Naive thymus-derived CD4-positive, alpha-beta T cell (primary cell): ENCODE measurements at regions of chr6 and their contacts with region 1.

Region 1: GRCh38 chr6:168370310-168370991 is 50.9 kb upstream of the DACT2 start:
- DNase-seq: peak; percentile 13 to 70 (median 52)
- ATAC-seq: peak; percentile 73
- H3K4me3 ChIP-seq: no peak overlapping the region
- H3K4me3 Mint-ChIP-seq: no peak overlapping the region
- H3K27ac ChIP-seq: no peak overlapping the region
- H3K27ac Mint-ChIP-seq: no peak overlapping the region
- H3K4me1 ChIP-seq: peaks cover 0 to 3% of the 10 kb centered on the region in 2 donors
- H3K4me1 Mint-ChIP-seq: peaks cover 0 to 14% (median 5%) of the 10 kb centered on the region in 7 donors
- H3K27me3 ChIP-seq: no peaks in the 10 kb centered on the region
- H3K27me3 Mint-ChIP-seq: peaks cover 3 to 14% (median 5%) of the 10 kb centered on the region in 5 donors

Region 2: GRCh38 chr6:167683028-167683862 is 687.2 kb before region 1 on chr6:
- CTCF ChIA-PET with region 1: no interaction called
- POLR2A ChIA-PET with region 1: no interaction called
- intact Hi-C with region 1: no loop called
- DNase-seq: no peak
- ATAC-seq: no peak
- H3K4me3 ChIP-seq: no peak overlapping the region
- H3K4me3 Mint-ChIP-seq: no peak overlapping the region
- H3K27ac ChIP-seq: no peak overlapping the region
- H3K27ac Mint-ChIP-seq: peak overlapping the region in 1 of 9 donors; percentile 84
- H3K4me1 ChIP-seq: no peaks in the 10 kb centered on the region
- H3K4me1 Mint-ChIP-seq: peaks cover 0 to 6% (median 3%) of the 10 kb centered on the region in 7 donors
- H3K27me3 ChIP-seq: peaks cover 0 to 7% of the 10 kb centered on the region in 2 donors
- H3K27me3 Mint-ChIP-seq: peaks cover 57 to 85% (median 67%) of the 10 kb centered on the region in 5 donors

Region 3: DNA sequence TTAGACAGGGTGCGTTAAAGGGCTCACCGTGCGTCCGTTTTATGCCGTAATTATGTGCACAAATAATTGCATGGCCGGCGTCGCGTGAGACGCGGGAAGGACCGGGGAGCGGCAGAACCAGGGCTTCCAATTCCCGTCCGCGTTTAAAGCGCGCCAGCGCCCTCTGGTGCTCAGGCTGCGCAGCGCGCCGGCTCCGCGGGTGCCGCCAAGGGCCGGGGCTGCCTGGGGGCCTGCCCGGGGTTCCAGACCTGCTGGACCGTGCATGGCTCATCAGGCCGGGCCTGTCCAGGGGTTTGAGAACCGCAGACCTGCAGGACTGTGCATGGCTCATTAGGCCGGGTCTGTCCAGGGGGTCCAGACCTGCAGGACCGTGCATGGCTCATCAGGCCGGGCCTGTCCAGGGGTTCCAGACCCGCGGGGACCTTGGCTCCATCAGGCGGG is 514.2 kb after region 1 on chr6:
- CTCF ChIA-PET with region 1: interaction called, 5 read pairs
- POLR2A ChIA-PET with region 1: interaction called, 3 read pairs
- intact Hi-C with region 1: loop called in 1 of 2 experiments (anchors 1 kb)
- DNase-seq: peak; percentile 49 to 86 (median 82)
- ATAC-seq: peak; percentile 91
- H3K4me3 ChIP-seq: peak overlapping the region; percentile 61
- H3K4me3 Mint-ChIP-seq: peak overlapping the region; percentile 70 to 95 (median 90)
- H3K27ac ChIP-seq: peak overlapping the region; percentile 56
- H3K27ac Mint-ChIP-seq: peak overlapping the region; percentile 86 to 95 (median 91)
- H3K4me1 ChIP-seq: peaks cover 8 to 9% of the 10 kb centered on the region in 2 donors
- H3K4me1 Mint-ChIP-seq: peaks cover 7 to 13% (median 9%) of the 10 kb centered on the region in 7 donors
- H3K27me3 ChIP-seq: no peaks in the 10 kb centered on the region
- H3K27me3 Mint-ChIP-seq: peaks cover 0 to 12% (median 0%) of the 10 kb centered on the region in 5 donors